ENCODE measurements at regions of chr1 and their contacts with region 1.

Region 1: GRCh38 chr1:43073490-43074230 is 98.4 kb downstream of the EBNA1BP2 start:
- DNase-seq: peak; percentile 66 to 76 (median 72)
- H3K4me3 ChIP-seq: no peak overlapping the region
- H3K4me3 Mint-ChIP-seq: no peak overlapping the region
- H3K27ac ChIP-seq: no peak overlapping the region
- H3K27ac Mint-ChIP-seq: peak overlapping the region in 3 of 7 donors; percentile 35 to 72 (median 70)
- H3K4me1 ChIP-seq: peaks cover 4% of the 10 kb centered on the region
- H3K4me1 Mint-ChIP-seq: peaks cover 2 to 9% (median 4%) of the 10 kb centered on the region in 4 donors
- H3K27me3 ChIP-seq: no peaks in the 10 kb centered on the region
- H3K27me3 Mint-ChIP-seq: no peaks in the 10 kb centered on the region

Region 2: GRCh38 chr1:42586016-42586415 is 487.6 kb before region 1 on chr1:
- CTCF ChIA-PET with region 1: interaction called, 15 read pairs
- POLR2A ChIA-PET with region 1: no interaction called
- intact Hi-C with region 1: no loop called
- DNase-seq: no peak
- H3K4me3 ChIP-seq: no peak overlapping the region
- H3K4me3 Mint-ChIP-seq: no peak overlapping the region
- H3K27ac ChIP-seq: no peak overlapping the region
- H3K27ac Mint-ChIP-seq: no peak overlapping the region
- H3K4me1 ChIP-seq: no peaks in the 10 kb centered on the region
- H3K4me1 Mint-ChIP-seq: no peaks in the 10 kb centered on the region
- H3K27me3 ChIP-seq: no peaks in the 10 kb centered on the region
- H3K27me3 Mint-ChIP-seq: no peaks in the 10 kb centered on the region

Region 3: GRCh38 chr1:42784946-42785693 is 288.5 kb before region 1 on chr1 and contains the start of gene TMEM269:
- CTCF ChIA-PET with region 1: interaction called, 16 read pairs
- POLR2A ChIA-PET with region 1: interaction called, 4 read pairs
- intact Hi-C with region 1: no loop called
- DNase-seq: peak; percentile 35 to 66 (median 40)
- H3K4me3 ChIP-seq: peak within 1 kb of the TSS; percentile 6 to 51
- H3K4me3 Mint-ChIP-seq: peak within 1 kb of the TSS; percentile 85 to 94 (median 88)
- H3K27ac ChIP-seq: peak within 1 kb of the TSS; percentile 8
- H3K27ac Mint-ChIP-seq: peak within 1 kb of the TSS; percentile 43 to 90 (median 87)
- H3K4me1 ChIP-seq: peaks cover 14% of the 10 kb centered on the region
- H3K4me1 Mint-ChIP-seq: peaks cover 8 to 23% (median 13%) of the 10 kb centered on the region in 4 donors
- H3K27me3 ChIP-seq: no peaks in the 10 kb centered on the region
- H3K27me3 Mint-ChIP-seq: no peaks in the 10 kb centered on the region
- total RNA-seq, gene TMEM269: 0.35 to 0.36 TPM

Region 4: GRCh38 chr1:42931108-42931539 is 142.5 kb before region 1 on chr1:
- CTCF ChIA-PET with region 1: interaction called, 864 read pairs
- POLR2A ChIA-PET with region 1: interaction called, 14 read pairs
- intact Hi-C with region 1: loop called (anchors 1 kb)
- DNase-seq: peak; percentile 67 to 73 (median 71)
- H3K4me3 ChIP-seq: peak overlapping the region in 1 of 2 donors; percentile 29
- H3K4me3 Mint-ChIP-seq: peak overlapping the region; percentile 75 to 92 (median 82)
- H3K27ac ChIP-seq: peak overlapping the region; percentile 53
- H3K27ac Mint-ChIP-seq: peak overlapping the region; percentile 92 to 98 (median 96)
- H3K4me1 ChIP-seq: peaks cover 64% of the 10 kb centered on the region
- H3K4me1 Mint-ChIP-seq: peaks cover 47 to 75% (median 62%) of the 10 kb centered on the region in 4 donors
- H3K27me3 ChIP-seq: no peaks in the 10 kb centered on the region
- H3K27me3 Mint-ChIP-seq: no peaks in the 10 kb centered on the region

Region 5: GRCh38 chr1:43034195-43034658 is 39.4 kb before region 1 on chr1:
- CTCF ChIA-PET with region 1: interaction called, 20 read pairs
- POLR2A ChIA-PET with region 1: no interaction called
- intact Hi-C with region 1: no loop called
- DNase-seq: no peak
- H3K4me3 ChIP-seq: no peak overlapping the region
- H3K4me3 Mint-ChIP-seq: peak overlapping the region in 7 of 8 donors; percentile 65 to 82 (median 70)
- H3K27ac ChIP-seq: peak overlapping the region; percentile 3
- H3K27ac Mint-ChIP-seq: peak overlapping the region; percentile 74 to 98 (median 92)
- H3K4me1 ChIP-seq: peaks cover 21% of the 10 kb centered on the region
- H3K4me1 Mint-ChIP-seq: peaks cover 14 to 28% (median 20%) of the 10 kb centered on the region in 4 donors
- H3K27me3 ChIP-seq: no peaks in the 10 kb centered on the region
- H3K27me3 Mint-ChIP-seq: no peaks in the 10 kb centered on the region

Region 6: DNA sequence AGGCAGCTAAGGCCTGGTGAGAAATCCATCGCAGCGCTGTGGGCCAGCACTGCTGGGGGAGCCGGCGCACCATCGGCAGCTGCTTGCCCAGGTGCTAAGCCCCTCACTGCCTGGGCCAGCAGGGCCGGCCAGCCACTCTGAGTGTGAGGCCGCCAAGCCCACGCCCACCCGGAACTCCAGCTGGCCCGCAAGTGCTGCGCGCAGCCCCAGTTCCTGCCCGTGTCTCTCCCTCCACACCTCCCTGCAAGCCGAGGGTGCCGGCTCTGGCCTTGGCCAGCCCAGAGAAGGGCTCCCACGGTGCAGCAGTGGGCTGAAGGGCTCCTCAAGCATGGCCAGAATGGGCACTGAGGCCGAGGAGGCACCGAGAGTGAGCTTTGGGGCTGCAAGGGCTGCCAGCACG is 34.0 kb after region 1 on chr1:
- CTCF ChIA-PET with region 1: no interaction called
- POLR2A ChIA-PET with region 1: no interaction called
- intact Hi-C with region 1: no loop called
- DNase-seq: no peak
- H3K4me3 ChIP-seq: no peak overlapping the region
- H3K4me3 Mint-ChIP-seq: no peak overlapping the region
- H3K27ac ChIP-seq: no peak overlapping the region
- H3K27ac Mint-ChIP-seq: no peak overlapping the region
- H3K4me1 ChIP-seq: no peaks in the 10 kb centered on the region
- H3K4me1 Mint-ChIP-seq: no peaks in the 10 kb centered on the region
- H3K27me3 ChIP-seq: no peaks in the 10 kb centered on the region
- H3K27me3 Mint-ChIP-seq: peaks cover 3 to 6% of the 10 kb centered on the region in 2 donors

Region 7: GRCh38 chr1:43334453-43335205 is 261.0 kb after region 1 on chr1:
- CTCF ChIA-PET with region 1: no interaction called
- POLR2A ChIA-PET with region 1: no interaction called
- intact Hi-C with region 1: no loop called
- DNase-seq: no peak
- H3K4me3 ChIP-seq: no peak overlapping the region
- H3K4me3 Mint-ChIP-seq: no peak overlapping the region
- H3K27ac ChIP-seq: no peak overlapping the region
- H3K27ac Mint-ChIP-seq: peak overlapping the region in 3 of 7 donors; percentile 1 to 54 (median 31)
- H3K4me1 ChIP-seq: no peaks in the 10 kb centered on the region
- H3K4me1 Mint-ChIP-seq: no peaks in the 10 kb centered on the region
- H3K27me3 ChIP-seq: no peaks in the 10 kb centered on the region
- H3K27me3 Mint-ChIP-seq: peaks cover 0 to 3% of the 10 kb centered on the region in 2 donors